Kidney (tissue), 22 donors: ENCODE measurements at regions of chr9 and their contacts with region 1.

Region 1: DNA sequence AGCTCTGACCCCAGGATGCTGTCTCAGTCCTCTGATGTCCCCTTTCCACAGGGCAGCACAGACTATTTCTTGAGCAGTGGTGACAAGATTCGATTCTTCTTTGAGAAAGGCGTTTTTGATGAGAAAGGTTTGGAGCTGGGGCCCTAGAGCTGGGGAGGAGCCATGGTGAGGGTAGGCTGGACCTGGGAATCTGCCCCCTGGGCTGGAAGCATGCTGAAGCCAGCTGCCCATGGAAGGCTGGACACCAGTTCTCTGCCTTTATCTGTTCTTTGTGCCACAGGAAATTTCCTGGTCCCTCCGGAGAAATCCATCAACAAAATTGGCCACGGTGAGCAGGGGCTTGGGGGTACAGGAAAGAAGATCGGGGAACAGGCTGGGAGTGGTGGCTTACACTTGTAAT is 12.9 kb downstream of the PHYHD1 start:
- DNase-seq: peak in 2 of 5 donors; percentile 7 to 34
- H3K4me3 ChIP-seq: no peak overlapping the region
- H3K27ac ChIP-seq: no peak overlapping the region
- H3K4me1 ChIP-seq: no peaks in the 10 kb centered on the region
- H3K27me3 ChIP-seq: no peaks in the 10 kb centered on the region
- CTCF ChIP-seq: no peak

Region 2: GRCh38 chr9:128677794-128678193 is 255.9 kb before region 1 on chr9:
- intact Hi-C with region 1: no loop called
- DNase-seq: peak in 1 of 5 donors; percentile 10
- H3K4me3 ChIP-seq: peak overlapping the region in 2 of 3 donors; percentile 39 to 55
- H3K27ac ChIP-seq: peak overlapping the region in 1 of 2 donors; percentile 32
- H3K4me1 ChIP-seq: no peaks in the 10 kb centered on the region
- H3K27me3 ChIP-seq: no peaks in the 10 kb centered on the region
- CTCF ChIP-seq: no peak

Region 3: DNA sequence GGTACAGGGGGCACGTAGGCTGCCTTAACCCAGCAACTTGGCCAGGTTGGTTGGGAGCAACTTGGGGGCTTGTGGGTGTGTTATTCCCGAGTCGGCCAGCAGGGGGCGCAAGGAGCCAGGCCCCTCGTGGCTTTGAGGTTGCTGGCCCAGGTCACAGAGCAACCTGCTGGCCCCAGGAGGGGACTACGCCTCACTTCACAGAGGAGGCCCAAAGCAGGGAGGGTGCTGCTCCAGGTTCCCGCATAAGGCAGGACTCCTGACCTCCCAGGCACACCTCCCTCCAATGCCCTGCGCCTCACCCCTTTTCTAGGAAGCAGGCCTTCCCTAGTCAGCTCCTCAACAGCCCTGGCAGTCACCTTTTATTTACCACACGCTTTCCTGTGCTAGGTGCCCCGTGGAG is 70.1 kb before region 1 on chr9:
- intact Hi-C with region 1: loop called (anchors 5 kb)
- DNase-seq: peak; percentile 53 to 87 (median 68)
- H3K4me3 ChIP-seq: no peak overlapping the region
- H3K27ac ChIP-seq: no peak overlapping the region
- H3K4me1 ChIP-seq: peaks cover 0 to 8% (median 3%) of the 10 kb centered on the region in 3 donors
- H3K27me3 ChIP-seq: no peaks in the 10 kb centered on the region
- CTCF ChIP-seq: peak; percentile 92

Region 4: DNA sequence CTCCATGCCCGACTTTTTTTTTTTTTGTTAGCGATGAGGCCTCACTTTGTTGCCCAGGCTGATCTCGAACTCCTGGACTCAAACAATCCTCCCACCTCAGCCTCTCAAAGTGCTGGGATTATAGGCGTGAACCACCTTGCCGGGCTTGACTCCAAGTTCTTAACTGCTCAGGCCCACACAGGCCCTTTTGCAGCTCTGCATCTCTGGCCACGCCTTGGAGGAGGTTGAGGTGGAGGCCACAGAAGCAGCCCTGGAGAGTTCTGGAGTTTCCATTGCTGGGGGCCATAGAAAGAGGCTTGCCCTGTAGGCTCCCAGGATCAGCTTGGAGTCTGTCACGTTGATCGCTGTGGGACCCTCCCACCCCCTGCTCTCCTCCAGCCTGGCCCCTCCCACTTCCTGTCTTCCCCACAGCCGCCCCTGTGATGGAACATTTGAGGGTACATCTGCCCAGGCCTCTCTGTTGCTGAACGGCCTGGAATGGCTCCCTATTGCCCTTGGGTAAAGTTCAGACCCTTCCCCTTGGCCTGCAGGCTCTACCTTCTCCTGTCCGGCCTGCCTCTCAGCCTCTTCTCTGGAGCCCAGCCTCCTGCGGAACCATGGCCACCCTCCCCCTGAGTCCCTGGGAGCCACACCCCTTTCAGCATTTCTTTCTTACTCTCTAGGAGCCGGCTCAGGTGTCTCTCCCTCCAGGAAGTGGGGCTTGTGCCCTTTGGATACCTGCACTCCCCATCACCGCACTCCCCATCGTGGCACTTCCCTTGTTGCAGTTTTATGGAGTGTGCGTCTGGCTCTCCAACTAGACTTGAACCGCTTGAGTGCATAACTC is 274.7 kb after region 1 on chr9:
- intact Hi-C with region 1: no loop called
- DNase-seq: peak in 2 of 5 donors; percentile 42 to 62
- H3K4me3 ChIP-seq: no peak overlapping the region
- H3K27ac ChIP-seq: no peak overlapping the region
- H3K4me1 ChIP-seq: no peaks in the 10 kb centered on the region
- H3K27me3 ChIP-seq: no peaks in the 10 kb centered on the region
- CTCF ChIP-seq: no peak